Mucosa of descending colon (tissue), 3 donors: ENCODE measurements at regions of chr14 and their contacts with region 1.

Region 1: GRCh38 chr14:60248697-60249318 is at the start of gene PPM1A:
- DNase-seq: peak; percentile 97 to 98 (median 98)
- ATAC-seq: peak; percentile 93
- H3K4me3 ChIP-seq: peak within 1 kb of the TSS; percentile 93
- H3K4me1 ChIP-seq: peaks cover 32% of the 10 kb centered on the region
- CTCF ChIP-seq: no peak
- total RNA-seq, gene PPM1A: 102 to 124 (median 111) TPM

Region 2: DNA sequence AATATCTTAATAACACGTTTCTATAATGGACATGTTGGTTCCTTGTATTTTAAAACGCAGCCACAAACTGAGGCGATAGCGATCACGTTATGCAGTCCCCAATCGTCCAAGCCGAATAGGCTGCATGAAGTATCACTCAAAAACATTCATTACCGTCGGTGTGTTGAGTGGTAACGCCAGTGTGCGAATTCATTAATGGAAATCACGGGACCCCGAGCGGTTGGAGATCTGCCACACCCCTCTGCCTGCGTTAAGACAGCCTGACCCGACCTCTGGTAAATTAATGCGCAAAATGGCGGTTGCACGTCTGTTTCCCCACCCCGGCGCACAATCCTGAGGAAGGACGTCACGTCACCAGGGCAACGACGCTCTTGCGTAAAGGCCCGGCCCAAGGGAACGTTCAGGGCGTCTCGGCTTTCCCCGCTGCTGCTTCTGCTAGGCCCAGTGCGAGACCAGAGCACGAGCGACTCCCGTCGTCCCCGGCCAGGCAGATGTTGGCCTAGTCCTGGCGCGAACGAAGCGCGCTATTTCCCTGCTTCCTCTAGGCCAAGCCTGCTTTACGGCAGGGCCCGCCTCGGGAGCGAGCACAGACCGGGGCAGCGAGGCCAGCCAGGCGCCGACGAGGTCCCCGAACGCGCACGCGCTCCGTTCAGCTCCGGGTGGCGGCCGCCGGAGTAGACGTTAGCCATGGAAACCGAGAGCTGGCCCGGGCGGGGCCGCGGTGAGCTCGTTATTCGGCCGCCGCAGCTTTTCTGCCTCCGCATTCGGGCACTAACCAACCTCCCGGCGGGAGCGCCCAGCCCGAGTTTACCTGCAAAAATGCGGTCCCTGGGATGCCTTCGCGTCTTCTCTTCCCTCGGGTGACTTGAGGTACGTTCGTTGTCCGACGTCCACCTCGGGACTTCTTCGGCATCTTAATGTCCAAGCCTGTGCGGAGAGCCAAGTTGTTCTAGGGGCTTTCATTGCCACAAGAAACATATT is 157.0 kb before region 1 on chr14 and contains the start of gene PCNX4:
- intact Hi-C with region 1: loop called in 1 of 2 experiments (anchors 10 kb)
- DNase-seq: peak; percentile 95 to 98 (median 98)
- ATAC-seq: peak; percentile 98
- H3K4me3 ChIP-seq: peak within 1 kb of the TSS; percentile 46
- H3K4me1 ChIP-seq: peaks cover 14% of the 10 kb centered on the region
- CTCF ChIP-seq: no peak
- total RNA-seq, gene PCNX4: 23.7 to 32.0 (median 25.7) TPM